ENCODE measurements at regions of chr22 and their contacts with region 1.

Region 1: GRCh38 chr22:50148991-50149721 is 21.4 kb upstream of the PANX2 start:
- DNase-seq: peak; percentile 84
- H3K4me3 ChIP-seq: no peak overlapping the region; a peak in 1 of 4 replicates
- H3K27ac ChIP-seq: no peak overlapping the region
- H3K4me1 ChIP-seq: peaks cover 0 to 14% of the 10 kb centered on the region in 2 experiments; a peak in 1 of 4 replicates
- H3K27me3 ChIP-seq: no peaks in the 10 kb centered on the region
- CTCF ChIP-seq: peak; percentile 55
- EP300 ChIP-seq: no peak
- RAD21 ChIP-seq: peak; percentile 76

Region 2: DNA sequence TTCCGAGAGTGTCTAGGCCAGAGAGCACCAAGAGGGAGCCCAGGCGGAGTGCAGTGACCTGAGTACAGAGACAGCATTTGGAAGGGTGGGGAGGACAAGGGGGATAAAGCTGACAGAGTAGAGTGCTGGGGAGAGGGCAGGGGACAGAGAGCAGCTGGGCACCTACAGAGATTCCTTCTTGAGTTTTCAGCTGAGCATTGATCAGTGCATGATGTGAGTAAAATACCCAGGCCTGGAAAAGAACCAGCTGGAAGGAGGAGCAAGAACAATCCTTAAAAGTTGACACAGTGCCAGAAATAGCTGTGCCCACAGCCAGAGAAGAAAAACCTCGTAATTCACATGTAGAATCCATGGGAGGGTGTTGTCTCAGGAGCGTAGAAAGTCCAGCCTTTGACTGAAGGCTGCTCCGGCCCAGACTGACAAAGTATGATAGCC is 12.6 kb before region 1 on chr22:
- CTCF ChIA-PET with region 1: interaction called, 18 read pairs
- POLR2A ChIA-PET with region 1: no interaction called
- DNase-seq: no peak
- H3K4me3 ChIP-seq: no peak overlapping the region
- H3K27ac ChIP-seq: no peak overlapping the region
- H3K4me1 ChIP-seq: no peaks in the 10 kb centered on the region
- H3K27me3 ChIP-seq: no peaks in the 10 kb centered on the region
- CTCF ChIP-seq: no peak
- EP300 ChIP-seq: no peak
- RAD21 ChIP-seq: no peak

Region 3: GRCh38 chr22:50169774-50170341 is 20.7 kb after region 1 on chr22:
- CTCF ChIA-PET with region 1: interaction called, 14 read pairs
- POLR2A ChIA-PET with region 1: no interaction called
- DNase-seq: peak; percentile 80
- H3K4me3 ChIP-seq: peak overlapping the region in 1 of 2 experiments; percentile 54; a peak in 2 of 4 replicates
- H3K27ac ChIP-seq: no peak overlapping the region
- H3K4me1 ChIP-seq: peaks cover 0 to 3% of the 10 kb centered on the region in 2 experiments; a peak in 1 of 4 replicates
- H3K27me3 ChIP-seq: no peaks in the 10 kb centered on the region
- CTCF ChIP-seq: no peak
- EP300 ChIP-seq: no peak
- RAD21 ChIP-seq: no peak

Region 4: GRCh38 chr22:50190182-50190940 is 41.2 kb after region 1 on chr22:
- CTCF ChIA-PET with region 1: interaction called, 16 read pairs
- POLR2A ChIA-PET with region 1: no interaction called
- DNase-seq: peak; percentile 91
- H3K4me3 ChIP-seq: no peak overlapping the region
- H3K27ac ChIP-seq: peak overlapping the region in 1 of 2 experiments; percentile 65; a peak in 2 of 4 replicates
- H3K4me1 ChIP-seq: peaks cover 4 to 42% of the 10 kb centered on the region in 2 experiments; a peak in 2 of 4 replicates
- H3K27me3 ChIP-seq: no peaks in the 10 kb centered on the region
- CTCF ChIP-seq: peak; percentile 32; the same call in 1 of the 2 replicates
- EP300 ChIP-seq: no peak
- RAD21 ChIP-seq: no peak

Region 5: GRCh38 chr22:50206599-50206998 is 57.4 kb after region 1 on chr22:
- CTCF ChIA-PET with region 1: interaction called, 52 read pairs
- POLR2A ChIA-PET with region 1: interaction called, 4 read pairs
- DNase-seq: peak; percentile 87
- H3K4me3 ChIP-seq: no peak overlapping the region
- H3K27ac ChIP-seq: no peak overlapping the region
- H3K4me1 ChIP-seq: peaks cover 0 to 7% of the 10 kb centered on the region in 2 experiments; a peak in 1 of 4 replicates
- H3K27me3 ChIP-seq: no peaks in the 10 kb centered on the region
- CTCF ChIP-seq: peak; percentile 54
- EP300 ChIP-seq: no peak
- RAD21 ChIP-seq: peak; percentile 22; the same call in 1 of the 2 replicates

Region 6: GRCh38 chr22:50218996-50219727 is 70.0 kb after region 1 on chr22:
- CTCF ChIA-PET with region 1: interaction called, 10 read pairs
- POLR2A ChIA-PET with region 1: no interaction called
- DNase-seq: peak; percentile 87
- H3K4me3 ChIP-seq: no peak overlapping the region
- H3K27ac ChIP-seq: no peak overlapping the region
- H3K4me1 ChIP-seq: peaks cover 0 to 22% of the 10 kb centered on the region in 2 experiments; a peak in 1 of 4 replicates
- H3K27me3 ChIP-seq: no peaks in the 10 kb centered on the region
- CTCF ChIP-seq: no peak
- EP300 ChIP-seq: no peak
- RAD21 ChIP-seq: no peak

Region 7: DNA sequence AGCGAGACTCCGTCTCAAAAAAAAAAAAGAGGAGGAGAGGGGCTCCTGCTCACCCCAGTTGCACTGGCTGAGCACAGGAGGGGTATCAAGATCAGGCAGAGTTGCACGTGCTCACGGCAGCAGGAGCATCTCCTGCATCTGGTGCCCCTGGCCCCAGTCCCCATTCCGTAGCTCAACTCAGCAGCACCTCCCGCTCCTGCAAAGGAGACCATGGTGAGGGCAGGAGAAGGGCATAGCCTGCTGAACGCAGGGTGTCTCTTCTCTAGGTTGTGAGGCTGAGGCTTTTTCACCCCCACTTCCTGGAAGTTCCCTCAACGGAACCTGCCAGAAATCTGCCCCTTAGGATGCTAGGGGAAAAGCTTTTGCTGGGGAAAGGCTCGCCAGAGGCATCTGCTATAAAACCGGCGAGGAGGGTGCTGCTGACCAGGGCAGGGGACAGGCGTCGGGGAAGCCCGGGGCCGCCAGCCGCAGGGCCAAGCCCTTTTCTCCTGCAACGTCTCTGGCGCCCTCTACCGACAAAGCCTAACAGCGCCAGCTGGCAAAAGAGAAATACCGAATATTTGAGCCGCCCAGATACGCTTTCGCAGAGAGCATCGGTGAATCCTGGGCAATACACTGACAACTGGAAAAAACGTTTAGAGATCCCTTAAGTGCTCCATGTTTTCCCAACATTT is 193.0 kb after region 1 on chr22:
- CTCF ChIA-PET with region 1: no interaction called
- POLR2A ChIA-PET with region 1: no interaction called
- DNase-seq: peak; percentile 87
- H3K4me3 ChIP-seq: peak overlapping the region; percentile 56 to 75
- H3K27ac ChIP-seq: peak overlapping the region; percentile 56 to 84
- H3K4me1 ChIP-seq: peaks cover 0 to 10% of the 10 kb centered on the region in 2 experiments; a peak in 1 of 4 replicates
- H3K27me3 ChIP-seq: no peaks in the 10 kb centered on the region
- CTCF ChIP-seq: peak; percentile 96
- EP300 ChIP-seq: no peak
- RAD21 ChIP-seq: peak; percentile 90

Region 8: GRCh38 chr22:50399751-50400331 is 250.7 kb after region 1 on chr22:
- CTCF ChIA-PET with region 1: no interaction called
- POLR2A ChIA-PET with region 1: no interaction called
- DNase-seq: peak; percentile 71
- H3K4me3 ChIP-seq: no peak overlapping the region; a peak in 1 of 4 replicates
- H3K27ac ChIP-seq: 0 out of 4 replicates have a peak overlapping the region, but pooled peaks of 1 of the 2 experiments have one; percentile 16
- H3K4me1 ChIP-seq: peaks cover 8 to 17% of the 10 kb centered on the region in 2 experiments; a peak in 2 of 4 replicates
- H3K27me3 ChIP-seq: no peaks in the 10 kb centered on the region
- CTCF ChIP-seq: peak; percentile 49
- EP300 ChIP-seq: no peak
- RAD21 ChIP-seq: peak; percentile 45